BJ (cell line): ENCODE measurements at regions of chr15 and their contacts with region 1.

Region 1: GRCh38 chr15:83436458-83437158 is 10.5 kb upstream of the SH3GL3 start:
- DNase-seq: no peak
- H3K4me3 ChIP-seq: no peak overlapping the region
- H3K27me3 ChIP-seq: no peaks in the 10 kb centered on the region; the same call in 1 of the 2 replicates
- CTCF ChIP-seq: peak; percentile 62

Region 2: DNA sequence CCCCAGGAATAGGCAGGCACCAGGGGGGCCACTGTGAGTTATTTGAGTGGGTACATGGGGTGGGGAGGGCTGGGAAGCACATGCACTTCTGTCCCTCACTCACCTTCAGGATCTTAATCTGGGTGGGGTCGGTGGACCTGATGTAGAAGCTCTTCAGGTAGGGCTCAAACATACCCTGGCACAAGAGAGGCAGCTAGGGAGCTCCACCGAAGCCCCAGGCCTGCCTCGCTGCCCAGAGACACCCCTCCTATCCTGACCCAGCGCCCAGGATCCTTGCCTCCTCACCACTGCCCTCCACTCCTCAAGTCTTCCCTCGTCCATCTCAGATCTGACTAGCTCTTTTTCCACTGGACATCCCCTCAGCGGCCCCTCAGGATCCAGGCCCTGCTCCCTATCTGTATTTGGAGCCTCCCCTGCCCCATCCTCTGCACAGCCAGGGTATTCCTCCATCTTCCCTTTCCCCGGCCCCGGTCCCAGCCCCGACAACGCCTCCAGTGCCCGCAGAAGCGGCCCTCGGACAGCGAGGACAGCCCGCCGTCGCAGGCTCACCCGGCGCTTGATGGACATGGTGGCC is 756.9 kb before region 1 on chr15:
- CTCF ChIA-PET with region 1: no interaction called
- POLR2A ChIA-PET with region 1: interaction called, 10 read pairs
- DNase-seq: no peak
- H3K4me3 ChIP-seq: no peak overlapping the region
- H3K27me3 ChIP-seq: peaks cover 8% of the 10 kb centered on the region
- CTCF ChIP-seq: no peak

Region 3: DNA sequence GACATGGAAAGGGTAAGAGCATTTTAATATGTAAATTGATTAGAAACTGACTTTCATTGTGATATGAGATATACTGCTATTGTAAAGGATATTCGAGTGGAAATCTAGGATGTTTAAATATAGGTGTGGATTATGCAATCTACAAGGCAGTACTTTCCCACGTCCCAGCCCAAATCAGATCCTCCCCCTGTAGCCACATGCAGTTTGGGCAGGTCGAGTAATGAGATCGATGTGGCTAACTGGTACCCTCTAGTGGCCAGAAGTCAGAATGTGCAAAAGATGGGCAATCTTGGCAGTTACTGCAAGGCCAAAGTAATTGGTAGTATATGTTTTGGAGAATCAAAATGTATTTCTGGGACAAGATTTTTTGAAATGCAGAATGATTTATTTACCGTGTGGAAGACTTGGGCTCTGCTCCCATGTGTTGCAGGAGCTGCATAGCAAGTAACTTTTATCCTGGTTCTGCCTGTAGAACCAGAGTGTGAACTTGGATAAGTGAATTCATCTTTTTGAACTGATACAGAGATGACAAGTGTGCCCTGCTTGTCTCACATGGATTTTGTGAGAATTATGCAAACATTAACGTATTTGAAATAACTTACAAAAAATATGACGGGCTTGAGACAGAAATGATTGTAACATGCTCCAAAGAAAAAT is 122.8 kb after region 1 on chr15:
- CTCF ChIA-PET with region 1: interaction called, 89 read pairs
- POLR2A ChIA-PET with region 1: no interaction called
- DNase-seq: no peak
- H3K4me3 ChIP-seq: no peak overlapping the region
- H3K27me3 ChIP-seq: no peaks in the 10 kb centered on the region; the same call in 1 of the 2 replicates
- CTCF ChIP-seq: peak; percentile 87

Region 4: GRCh38 chr15:83698294-83698693 is 261.7 kb after region 1 on chr15:
- CTCF ChIA-PET with region 1: no interaction called
- POLR2A ChIA-PET with region 1: no interaction called
- DNase-seq: no peak
- H3K4me3 ChIP-seq: no peak overlapping the region
- H3K27me3 ChIP-seq: no peaks in the 10 kb centered on the region
- CTCF ChIP-seq: no peak